ENCODE measurements at regions of chr18 and their contacts with region 1.

Region 1: DNA sequence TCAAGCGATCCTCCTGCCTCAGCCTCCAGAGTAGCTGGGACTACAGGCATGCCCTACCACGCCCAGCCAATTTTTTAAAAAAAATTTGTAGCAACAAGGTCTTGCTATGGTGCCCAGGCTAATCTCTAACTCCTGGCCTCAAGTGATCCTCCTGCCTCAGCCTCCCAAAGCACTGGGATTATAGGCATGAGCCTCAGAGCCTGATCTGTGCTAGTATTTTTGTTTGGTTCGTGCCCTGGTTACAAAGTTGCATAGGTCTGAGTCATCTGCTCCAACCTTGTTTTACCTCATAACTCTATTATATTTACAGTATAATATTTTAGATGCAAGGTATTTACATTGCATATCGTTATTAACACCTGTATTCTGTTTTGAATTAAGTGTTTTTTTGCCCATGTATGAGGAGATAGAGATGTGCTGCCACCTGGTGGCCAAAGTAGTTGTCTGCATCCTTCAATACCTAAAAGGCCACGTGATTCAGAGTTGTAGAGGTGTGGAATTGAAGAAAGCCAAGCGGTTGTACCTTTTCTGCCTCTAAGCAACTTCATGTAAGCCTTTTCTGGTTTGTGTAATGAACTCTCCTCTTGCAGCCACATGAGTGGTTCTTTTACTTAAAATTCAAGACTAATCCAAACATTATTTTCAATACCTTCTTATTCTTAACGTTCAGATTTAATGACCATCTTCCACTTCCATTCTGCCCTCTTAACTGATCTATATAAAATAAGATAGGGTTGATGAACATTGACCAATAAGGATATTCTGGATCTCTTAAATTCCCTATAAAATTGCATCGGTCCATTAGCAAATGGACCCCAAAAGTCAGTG is 19.9 kb upstream of the CABYR start:
- DNase-seq: peak; percentile 62
- H3K4me3 Mint-ChIP-seq: no peak overlapping the region
- H3K27ac Mint-ChIP-seq: no peak overlapping the region
- H3K4me1 Mint-ChIP-seq: peaks cover 14% of the 10 kb centered on the region
- H3K27me3 Mint-ChIP-seq: no peaks in the 10 kb centered on the region

Region 2: GRCh38 chr18:23812546-23813440 is 306.2 kb before region 1 on chr18:
- intact Hi-C with region 1: loop called (anchors 5 kb)
- DNase-seq: no peak
- H3K4me3 Mint-ChIP-seq: no peak overlapping the region
- H3K27ac Mint-ChIP-seq: no peak overlapping the region
- H3K4me1 Mint-ChIP-seq: peaks cover 12% of the 10 kb centered on the region
- H3K27me3 Mint-ChIP-seq: peaks cover 17% of the 10 kb centered on the region

Region 3: DNA sequence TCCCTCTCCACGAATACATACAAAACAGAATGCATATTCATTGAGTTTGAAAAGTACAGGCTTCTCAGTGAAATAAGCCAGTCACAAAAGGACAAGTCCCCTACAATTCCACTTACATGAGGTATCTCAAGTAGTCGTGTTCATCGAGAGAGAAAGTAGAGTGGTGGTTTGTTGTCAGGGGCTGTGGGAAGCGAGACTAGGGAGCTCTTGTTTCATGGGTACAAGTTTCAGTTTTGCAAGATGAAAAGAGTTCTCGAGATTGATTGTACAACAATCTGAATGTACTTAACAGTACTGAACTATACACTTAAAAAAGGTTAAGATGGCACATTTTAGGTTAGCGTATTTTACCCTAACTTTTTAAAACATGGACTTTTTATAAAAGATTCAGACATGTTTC is 175.9 kb before region 1 on chr18:
- intact Hi-C with region 1: loop called (anchors 5 kb)
- DNase-seq: peak; percentile 39
- H3K4me3 Mint-ChIP-seq: peak overlapping the region; percentile 47
- H3K27ac Mint-ChIP-seq: peak overlapping the region; percentile 1
- H3K4me1 Mint-ChIP-seq: peaks cover 40% of the 10 kb centered on the region
- H3K27me3 Mint-ChIP-seq: peaks cover 48% of the 10 kb centered on the region

Region 4: DNA sequence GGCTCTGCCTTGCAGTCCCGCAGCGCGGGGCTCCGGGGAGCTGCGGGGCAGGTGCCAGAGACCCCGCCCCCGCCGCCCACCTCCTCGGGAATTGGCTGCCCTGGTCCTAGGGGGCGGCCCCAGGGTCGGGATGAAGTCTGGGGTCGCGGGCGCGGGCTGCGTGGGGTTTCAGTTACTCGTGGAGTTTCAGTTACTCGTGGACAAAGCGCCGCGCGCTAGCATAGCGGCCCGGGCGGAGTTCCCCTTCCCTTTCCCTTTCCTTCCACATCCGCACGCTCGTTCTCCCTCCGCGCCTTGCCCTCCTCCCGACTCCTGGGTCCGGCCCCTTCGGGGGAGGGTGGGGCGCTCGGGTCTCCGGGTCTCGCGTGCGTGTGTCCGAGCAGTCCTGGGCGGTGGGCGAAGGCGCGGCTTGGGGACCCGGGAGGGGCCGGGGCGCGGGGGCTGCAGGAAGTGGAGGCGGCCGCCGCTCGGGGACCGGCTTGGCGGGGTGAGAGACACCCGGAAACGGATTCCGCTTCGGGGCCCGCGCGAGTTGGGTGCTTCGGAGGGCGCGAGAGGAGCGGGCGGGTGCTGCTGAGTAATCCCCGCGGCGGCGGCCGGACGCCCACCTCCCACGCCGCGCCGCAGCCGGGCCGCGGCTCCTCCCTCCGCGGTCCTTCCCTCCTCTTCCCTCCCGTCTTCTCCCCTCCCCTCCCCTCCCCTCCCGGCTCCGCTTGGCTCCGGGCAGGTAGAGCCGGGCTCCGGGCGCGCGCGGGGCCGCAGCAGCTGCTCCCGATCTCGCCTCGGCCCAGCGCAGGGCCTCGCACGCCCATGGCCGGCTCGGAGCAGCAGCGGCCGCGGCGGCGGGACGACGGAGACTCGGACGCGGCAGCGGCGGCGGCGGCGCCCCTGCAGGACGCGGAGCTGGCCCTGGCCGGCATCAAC is 104.6 kb before region 1 on chr18 and contains the start of gene TTC39C:
- intact Hi-C with region 1: loop called (anchors 2 kb)
- DNase-seq: peak; percentile 80
- H3K4me3 Mint-ChIP-seq: peak within 1 kb of the TSS; percentile 92
- H3K27ac Mint-ChIP-seq: peak within 1 kb of the TSS; percentile 84
- H3K4me1 Mint-ChIP-seq: peaks cover 73% of the 10 kb centered on the region
- H3K27me3 Mint-ChIP-seq: no peaks in the 10 kb centered on the region
- total RNA-seq, gene TTC39C: 14.3 and 20.1 TPM in 2 replicates

Region 5: DNA sequence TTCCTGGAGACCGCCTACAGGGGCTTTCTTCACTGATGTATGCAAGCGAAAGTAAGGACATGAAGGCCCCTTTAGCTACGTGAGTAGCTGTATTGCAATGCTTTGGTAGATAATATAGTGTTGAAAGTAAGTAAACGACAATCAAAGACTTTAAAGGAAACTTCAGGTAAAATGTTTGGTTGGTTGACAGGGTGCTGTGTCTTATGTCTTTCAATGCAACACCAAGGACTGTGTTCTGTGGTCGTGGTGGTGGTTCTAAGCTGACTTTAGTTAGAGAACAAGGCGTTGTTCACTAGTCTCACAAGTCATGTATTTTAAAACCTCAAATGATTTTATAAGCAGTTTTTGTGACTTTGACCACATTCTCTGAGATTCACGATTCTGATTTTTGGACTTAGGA is 38.1 kb before region 1 on chr18:
- intact Hi-C with region 1: loop called (anchors 5 kb)
- DNase-seq: no peak
- H3K4me3 Mint-ChIP-seq: no peak overlapping the region
- H3K27ac Mint-ChIP-seq: no peak overlapping the region
- H3K4me1 Mint-ChIP-seq: peaks cover 45% of the 10 kb centered on the region
- H3K27me3 Mint-ChIP-seq: no peaks in the 10 kb centered on the region

Measured in activated T-helper 2 cell treated with anti-CD3 and anti-CD28 coated beads, Interferon-gamma antibody, Interleukin-2, Interleukin-4, amounts not matched to agents 10 μg/mL and 5 μg/mL and 100 μg/mL, durations not matched to agents 14 hours and 24 hours and 36 hours (primary cell).